H1 (cell line): ENCODE measurements at regions of chr4 and their contacts with region 1.

Region 1: DNA sequence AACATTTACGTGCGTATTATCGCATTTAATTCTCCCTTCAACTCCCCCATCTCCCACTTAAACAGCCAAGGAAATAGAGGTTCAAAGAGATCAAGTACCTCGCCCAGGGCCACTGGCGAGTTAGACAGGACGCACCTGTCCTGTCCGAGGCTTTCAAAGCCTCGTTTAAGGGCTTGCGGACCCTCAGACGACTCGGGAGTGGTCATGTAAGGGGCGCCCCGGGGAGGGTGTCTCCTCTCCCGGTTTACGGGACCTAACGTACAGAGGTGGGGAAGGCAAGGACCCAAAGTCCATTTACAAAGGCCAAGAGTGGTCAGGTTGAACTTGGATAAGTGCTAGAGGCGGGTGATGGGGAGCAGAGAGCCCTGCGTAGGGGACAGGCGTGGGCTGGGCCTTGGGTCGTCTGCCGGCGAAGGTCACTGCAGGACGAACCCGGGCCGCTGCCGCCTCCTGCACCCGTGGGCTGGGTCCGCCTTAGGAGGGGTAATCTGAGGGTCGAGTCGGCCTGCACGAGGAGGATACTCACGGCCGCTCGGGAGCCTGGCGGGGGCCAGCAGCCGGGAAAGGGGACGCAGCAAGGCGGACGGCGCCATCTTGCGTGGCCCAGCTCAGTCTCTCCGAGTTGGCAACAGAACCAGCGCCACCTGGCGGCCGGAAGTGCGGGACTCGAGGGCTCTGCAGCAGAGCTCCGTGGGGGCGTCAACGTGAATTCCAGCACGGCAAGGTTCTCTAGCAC is 5.9 kb upstream of the NAA15 start:
- DNase-seq: peak; percentile 79 to 99
- H3K4me3 ChIP-seq: peak overlapping the region; percentile 59 to 89 (median 81)
- H3K27ac ChIP-seq: peak overlapping the region; percentile 70; the same call in 1 of the 2 replicates
- H3K4me1 ChIP-seq: peaks cover 0 to 1% (median 0%) of the 10 kb centered on the region in 4 experiments; a peak in 2 of 7 replicates
- H3K27me3 ChIP-seq: no peaks in the 10 kb centered on the region
- CTCF ChIP-seq: peak; percentile 96 to 98 (median 98)
- EP300 ChIP-seq: no peak
- POLR2A ChIP-seq: peak in 1 of 2 experiments; percentile 83; a peak in 2 of 3 replicates
- RAD21 ChIP-seq: peak; percentile 86 to 90

Region 2: GRCh38 chr4:139030614-139031235 is 264.6 kb before region 1 on chr4:
- CTCF ChIA-PET with region 1: interaction called, 12 read pairs
- POLR2A ChIA-PET with region 1: no interaction called
- DNase-seq: peak; percentile 43 to 78
- H3K4me3 ChIP-seq: no peak overlapping the region
- H3K27ac ChIP-seq: no peak overlapping the region; the same call in 1 of the 2 replicates
- H3K4me1 ChIP-seq: peaks cover 0 to 6% (median 3%) of the 10 kb centered on the region in 4 experiments; a peak in 4 of 7 replicates
- H3K27me3 ChIP-seq: no peaks in the 10 kb centered on the region
- CTCF ChIP-seq: peak in 2 of 3 experiments; percentile 83 to 96; a peak in 3 of 4 replicates
- EP300 ChIP-seq: no peak
- POLR2A ChIP-seq: no peak
- RAD21 ChIP-seq: peak; percentile 96

Region 3: DNA sequence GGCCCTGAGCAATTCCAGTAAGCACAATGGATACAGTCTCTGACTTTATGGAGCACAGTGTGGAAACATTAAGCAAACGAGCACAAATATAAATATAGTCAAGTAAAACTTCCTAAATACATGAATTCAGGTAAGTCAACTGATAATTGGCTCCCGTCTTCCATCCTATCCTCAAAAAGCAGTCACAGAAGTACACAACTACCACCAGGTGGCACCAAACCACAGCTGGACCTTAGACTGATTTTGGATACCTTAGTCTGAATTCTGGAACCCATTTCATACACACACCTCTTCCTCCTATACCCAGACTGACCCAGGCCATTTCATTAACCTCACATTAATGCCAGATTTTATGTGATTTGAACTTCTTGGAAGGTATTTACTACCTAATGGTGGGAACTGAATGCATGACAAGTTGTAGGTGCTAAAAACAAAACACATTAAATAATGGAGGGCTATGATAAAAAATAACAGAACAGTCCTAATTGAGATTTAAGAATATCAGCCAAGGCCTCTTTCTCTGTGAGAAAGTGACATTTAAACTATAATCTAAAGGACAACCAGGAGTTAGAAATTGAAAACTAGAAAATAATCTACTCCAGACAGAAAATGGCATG is 195.9 kb before region 1 on chr4:
- CTCF ChIA-PET with region 1: interaction called, 34 read pairs
- POLR2A ChIA-PET with region 1: no interaction called
- DNase-seq: peak in 1 of 2 experiments; percentile 73
- H3K4me3 ChIP-seq: no peak overlapping the region
- H3K27ac ChIP-seq: no peak overlapping the region
- H3K4me1 ChIP-seq: no peaks in the 10 kb centered on the region
- H3K27me3 ChIP-seq: no peaks in the 10 kb centered on the region
- CTCF ChIP-seq: peak; percentile 25 to 91 (median 84)
- EP300 ChIP-seq: no peak
- POLR2A ChIP-seq: no peak
- RAD21 ChIP-seq: peak; percentile 97 to 99

Region 4: GRCh38 chr4:139229534-139230039 is 65.8 kb before region 1 on chr4:
- CTCF ChIA-PET with region 1: interaction called, 30 read pairs
- POLR2A ChIA-PET with region 1: interaction called, 4 read pairs
- DNase-seq: no peak
- H3K4me3 ChIP-seq: no peak overlapping the region
- H3K27ac ChIP-seq: no peak overlapping the region
- H3K4me1 ChIP-seq: peaks cover 0 to 7% (median 2%) of the 10 kb centered on the region in 4 experiments; a peak in 3 of 7 replicates
- H3K27me3 ChIP-seq: no peaks in the 10 kb centered on the region
- CTCF ChIP-seq: peak in 2 of 3 experiments; percentile 16 to 60; a peak in 2 of 4 replicates
- EP300 ChIP-seq: no peak
- POLR2A ChIP-seq: no peak
- RAD21 ChIP-seq: peak; percentile 48 to 59

Region 5: DNA sequence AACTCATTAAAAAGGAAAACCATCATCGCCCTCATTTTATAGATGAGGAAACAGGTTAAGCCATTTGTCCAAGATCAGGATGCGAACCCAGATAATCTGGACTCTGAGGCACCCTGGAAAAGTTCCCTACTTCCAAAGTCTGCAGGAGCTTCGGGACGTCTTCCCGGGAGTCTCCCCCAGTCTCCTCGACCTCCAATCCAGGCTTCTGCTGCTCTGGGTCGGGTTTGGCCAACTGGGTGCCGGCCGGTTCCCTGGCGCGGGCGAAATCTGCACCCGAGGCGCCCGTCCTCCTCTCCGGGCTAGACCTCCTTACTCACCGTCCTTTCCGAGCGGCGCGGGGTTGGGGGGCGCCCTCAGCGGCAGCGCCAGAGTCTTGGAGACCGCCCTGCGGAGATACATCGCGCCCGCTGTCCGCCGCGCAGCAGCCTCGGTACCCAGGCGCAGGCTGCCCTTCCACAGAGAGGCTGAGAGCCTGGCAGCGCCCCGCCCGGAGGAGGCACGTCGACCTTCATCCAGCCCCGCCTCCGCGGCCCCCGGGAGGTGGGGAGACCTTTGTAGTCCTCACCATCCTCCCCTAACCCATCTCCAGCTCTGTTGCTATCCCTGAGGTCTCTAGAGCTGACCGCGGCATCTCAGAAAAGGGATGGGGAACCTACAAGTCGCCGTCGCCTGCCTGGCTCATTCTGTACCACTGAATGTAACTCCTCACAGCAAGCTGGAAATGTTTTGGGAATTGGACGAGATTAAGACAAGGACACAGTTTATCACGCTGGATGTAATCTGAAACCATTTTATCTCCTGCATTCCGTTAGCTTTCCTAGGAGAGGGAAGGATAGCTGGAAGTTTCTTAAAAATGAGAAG is 15.4 kb before region 1 on chr4 and contains the start of gene MGARP:
- CTCF ChIA-PET with region 1: interaction called, 34 read pairs
- POLR2A ChIA-PET with region 1: interaction called, 9 read pairs
- DNase-seq: peak; percentile 50 to 88
- H3K4me3 ChIP-seq: peak within 1 kb of the TSS; percentile 49 to 65 (median 54)
- H3K27ac ChIP-seq: no peak within 1 kb of the TSS
- H3K4me1 ChIP-seq: peaks cover 2 to 5% (median 4%) of the 10 kb centered on the region in 4 experiments; a peak in 5 of 7 replicates
- H3K27me3 ChIP-seq: peaks cover 5 to 35% (median 25%) of the 10 kb centered on the region in 4 experiments
- CTCF ChIP-seq: no peak
- EP300 ChIP-seq: no peak
- POLR2A ChIP-seq: no peak
- RAD21 ChIP-seq: no peak; a peak in 1 of 4 replicates
- total RNA-seq, gene MGARP: 2.5 and 2.8 TPM in 2 replicates

Region 6: GRCh38 chr4:139331185-139331584 is 35.8 kb after region 1 on chr4:
- CTCF ChIA-PET with region 1: interaction called, 11 read pairs
- POLR2A ChIA-PET with region 1: interaction called, 5 read pairs
- DNase-seq: no peak
- H3K4me3 ChIP-seq: no peak overlapping the region
- H3K27ac ChIP-seq: no peak overlapping the region
- H3K4me1 ChIP-seq: peaks cover 0 to 6% (median 2%) of the 10 kb centered on the region in 4 experiments; a peak in 3 of 7 replicates
- H3K27me3 ChIP-seq: no peaks in the 10 kb centered on the region
- CTCF ChIP-seq: no peak
- EP300 ChIP-seq: no peak
- POLR2A ChIP-seq: no peak
- RAD21 ChIP-seq: no peak